ENCODE measurements at regions of chr3 and their contacts with region 1.

Region 1: DNA sequence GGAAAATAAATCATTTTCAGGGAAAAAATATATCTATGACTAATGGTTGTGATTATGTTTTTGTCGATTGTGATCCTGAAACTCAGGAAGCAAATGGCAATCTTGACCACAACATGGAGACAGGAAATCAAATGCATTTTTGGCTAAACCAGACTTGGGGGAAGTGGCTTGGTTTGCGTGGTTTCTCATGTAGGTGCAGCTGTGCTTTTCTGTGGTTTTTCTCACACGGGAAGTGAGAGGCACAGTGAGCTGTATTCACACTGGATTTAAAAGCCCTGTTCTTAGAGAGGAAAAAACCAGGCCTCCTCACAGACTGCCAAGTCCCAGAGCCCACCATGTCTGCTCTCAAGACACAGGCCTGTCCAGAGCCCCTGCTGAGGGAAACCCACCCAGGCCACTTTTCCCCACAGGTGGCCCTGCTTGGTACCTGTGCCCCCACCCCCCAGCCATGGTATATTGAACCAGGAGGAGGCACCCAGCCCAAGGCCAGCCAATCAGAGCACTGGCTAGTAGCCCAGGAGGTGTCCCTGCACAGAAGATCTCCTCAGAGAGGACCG is 46.1 kb downstream of the BTD start:
- DNase-seq: peak; percentile 99
- ATAC-seq: peak; percentile 38
- H3K4me3 ChIP-seq: no peak overlapping the region
- H3K27ac ChIP-seq: peak overlapping the region; percentile 98
- H3K4me1 ChIP-seq: peaks cover 22% of the 10 kb centered on the region
- H3K27me3 ChIP-seq: no peaks in the 10 kb centered on the region
- CTCF ChIP-seq: no peak
- POLR2A ChIP-seq: peak; percentile 65
- RAD21 ChIP-seq: peak; percentile 18; the same call in 1 of the 2 replicates

Region 2: DNA sequence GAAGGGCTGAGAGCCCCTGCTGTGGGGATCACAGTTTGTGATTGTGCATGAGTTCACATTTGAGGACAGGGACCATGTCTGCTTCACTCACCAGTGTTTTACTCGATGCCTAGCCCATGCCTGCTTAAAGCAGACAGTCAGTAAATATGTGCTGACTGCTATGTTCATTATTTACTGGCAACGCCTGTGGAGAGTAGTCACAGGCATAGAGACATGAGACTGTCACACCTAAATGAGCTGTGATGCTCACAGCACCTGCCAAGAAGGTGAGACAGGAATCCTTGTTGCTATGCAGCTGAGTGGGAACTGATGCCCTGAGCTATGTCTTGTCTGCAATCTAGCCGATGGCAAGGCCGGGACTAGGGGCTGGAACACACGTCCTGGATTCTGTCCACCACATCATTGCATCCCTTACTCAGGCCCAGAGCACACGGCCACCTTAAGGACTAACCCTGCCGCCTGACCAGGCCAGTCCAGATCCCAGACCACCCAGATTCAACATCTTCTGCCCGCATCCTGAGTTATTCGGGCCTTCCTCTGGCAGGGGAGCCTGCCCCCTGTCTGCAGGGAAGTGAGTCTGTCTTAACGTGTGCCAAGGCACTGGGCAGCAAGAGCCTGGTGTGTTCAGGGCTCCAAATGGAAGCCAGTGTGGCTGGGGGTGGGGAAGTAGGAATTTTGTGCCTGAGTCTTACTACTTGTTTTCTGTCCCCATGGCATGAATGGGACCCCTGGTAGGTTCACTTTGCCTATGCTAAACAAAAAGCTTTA is 784.2 kb before region 1 on chr3:
- CTCF ChIA-PET with region 1: no interaction called
- POLR2A ChIA-PET with region 1: no interaction called
- dilution Hi-C with region 1: no loop called
- in situ Hi-C with region 1: no loop called
- intact Hi-C with region 1: no loop called
- DNase-seq: no peak
- ATAC-seq: no peak
- H3K4me3 ChIP-seq: no peak overlapping the region
- H3K27ac ChIP-seq: no peak overlapping the region
- H3K4me1 ChIP-seq: no peaks in the 10 kb centered on the region
- H3K27me3 ChIP-seq: peaks cover 6% of the 10 kb centered on the region
- CTCF ChIP-seq: no peak
- POLR2A ChIP-seq: no peak
- RAD21 ChIP-seq: no peak

Region 3: DNA sequence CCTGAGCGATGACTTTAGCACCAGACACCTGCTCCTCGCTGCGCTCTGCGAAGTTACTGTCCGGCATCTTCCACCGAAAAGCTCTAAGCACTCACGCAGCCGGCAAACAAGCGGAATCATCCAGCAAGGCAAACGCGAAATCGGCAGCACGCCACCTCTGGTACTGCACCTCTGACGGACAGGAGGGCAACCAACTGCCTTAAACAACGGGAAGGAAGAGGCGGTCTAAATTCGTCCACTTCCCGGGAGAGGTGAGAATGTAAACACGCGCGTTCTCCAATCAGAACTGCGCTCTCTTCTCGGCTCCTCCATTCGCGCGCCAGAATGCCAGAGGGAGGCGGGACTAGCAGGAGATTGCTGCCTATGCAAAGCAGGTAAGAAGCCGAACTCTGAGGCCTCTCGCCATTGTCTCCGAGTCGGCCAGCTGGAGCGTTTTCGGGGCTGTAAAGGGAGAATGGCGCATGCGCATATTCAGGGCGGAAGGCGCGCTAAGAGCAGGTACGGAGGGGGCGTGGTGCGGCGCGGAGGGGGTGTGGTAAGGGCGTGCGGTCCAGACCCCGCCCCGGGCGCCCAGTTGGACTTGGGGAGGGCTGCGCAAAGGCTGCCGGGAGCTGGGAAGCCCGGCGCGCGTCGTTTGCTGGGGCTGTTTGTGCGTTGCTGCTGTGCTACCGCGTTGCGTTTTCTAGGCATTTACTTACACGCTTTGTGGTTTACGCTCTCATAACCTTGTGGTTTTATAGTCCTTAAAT is 46.1 kb before region 1 on chr3 and contains the starts of genes BTD and HACL1:
- CTCF ChIA-PET with region 1: no interaction called
- POLR2A ChIA-PET with region 1: no interaction called
- dilution Hi-C with region 1: no loop called
- in situ Hi-C with region 1: no loop called
- intact Hi-C with region 1: loop called (anchors 1 kb)
- DNase-seq: peak; percentile 99
- ATAC-seq: peak; percentile 97
- H3K4me3 ChIP-seq: peak within 1 kb of the TSS; percentile 66
- H3K27ac ChIP-seq: peak within 1 kb of the TSS; percentile 56
- H3K4me1 ChIP-seq: peaks cover 2% of the 10 kb centered on the region; the same call in 1 of the 2 replicates
- H3K27me3 ChIP-seq: no peaks in the 10 kb centered on the region
- CTCF ChIP-seq: peak; percentile 29; the same call in 1 of the 2 replicates
- POLR2A ChIP-seq: peak; percentile 68
- RAD21 ChIP-seq: no peak
- total RNA-seq, gene BTD: 14.2 and 21.1 TPM in 2 replicates
- total RNA-seq, gene HACL1: 28.1 and 31.4 TPM in 2 replicates

Region 4: DNA sequence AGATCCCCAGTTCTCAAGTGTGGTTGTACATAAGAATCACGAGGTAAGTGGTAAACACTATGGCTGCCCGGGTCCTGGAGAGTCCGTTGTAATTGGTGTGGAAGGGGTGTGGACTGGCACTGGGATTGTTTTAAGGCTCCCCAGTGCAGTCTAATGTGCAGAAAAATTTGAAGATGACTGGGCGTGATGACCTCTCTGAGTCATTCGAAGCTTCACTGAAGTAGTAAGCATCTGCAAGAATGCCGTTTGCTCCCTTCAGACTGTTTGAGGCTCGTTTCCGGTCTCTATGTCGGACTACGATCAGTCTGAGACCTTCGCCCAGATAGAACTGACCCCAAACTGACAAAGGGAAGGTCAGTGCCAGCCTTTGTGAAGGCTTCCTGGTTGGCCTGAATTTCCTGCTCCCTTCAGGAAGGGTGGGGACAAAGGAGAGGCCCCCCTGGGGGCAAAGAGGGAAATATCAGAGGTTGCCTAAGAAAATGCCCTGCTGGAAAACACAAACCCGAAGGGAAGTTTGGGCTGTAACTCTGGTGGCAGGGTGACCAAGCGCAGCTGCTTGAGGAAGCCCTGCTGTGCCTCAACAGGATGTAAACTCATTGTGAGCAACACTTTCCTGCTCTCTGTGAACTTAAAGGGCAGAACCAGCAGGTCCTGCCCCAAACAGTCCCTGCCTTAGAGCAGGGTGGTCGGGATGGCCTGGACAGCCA is 11.5 kb before region 1 on chr3:
- CTCF ChIA-PET with region 1: interaction called, 6 read pairs
- POLR2A ChIA-PET with region 1: no interaction called
- dilution Hi-C with region 1: no loop called
- in situ Hi-C with region 1: no loop called
- intact Hi-C with region 1: loop called (anchors 1 kb)
- DNase-seq: peak; percentile 96
- ATAC-seq: peak; percentile 78
- H3K4me3 ChIP-seq: no peak overlapping the region
- H3K27ac ChIP-seq: peak overlapping the region; percentile 86
- H3K4me1 ChIP-seq: peaks cover 37% of the 10 kb centered on the region
- H3K27me3 ChIP-seq: no peaks in the 10 kb centered on the region
- CTCF ChIP-seq: 0 out of 2 replicates have a peak, but pooled peaks have one; percentile 3
- POLR2A ChIP-seq: peak; percentile 50; the same call in 1 of the 2 replicates
- RAD21 ChIP-seq: no peak

Region 5: DNA sequence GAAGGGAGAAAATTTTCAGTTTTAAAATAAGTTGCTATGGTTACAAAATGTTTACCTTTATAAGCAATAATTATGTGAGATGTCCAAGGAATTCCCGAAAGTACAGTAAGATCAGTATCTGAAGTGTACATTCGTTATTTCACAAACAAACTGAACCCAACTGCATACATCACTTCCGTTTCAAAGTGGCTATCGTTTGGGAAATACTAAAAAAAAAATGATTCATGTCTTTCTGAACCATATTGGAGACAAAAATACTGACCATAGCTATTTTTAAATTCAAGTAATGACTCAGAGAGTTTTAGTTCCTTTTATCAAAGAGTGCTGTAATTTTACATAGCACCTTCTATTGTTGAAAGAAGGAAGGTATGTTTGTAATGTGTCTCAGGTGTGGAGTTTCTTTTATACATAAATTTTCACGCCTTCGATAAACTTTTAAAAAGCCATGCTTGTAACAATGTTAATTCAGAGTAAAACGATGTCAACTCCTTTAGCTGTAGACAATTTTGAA is 158.1 kb after region 1 on chr3:
- CTCF ChIA-PET with region 1: no interaction called
- POLR2A ChIA-PET with region 1: no interaction called
- dilution Hi-C with region 1: no loop called
- in situ Hi-C with region 1: loop called (anchors 10 kb)
- intact Hi-C with region 1: no loop called
- DNase-seq: peak; percentile 89
- ATAC-seq: peak; percentile 56
- H3K4me3 ChIP-seq: no peak overlapping the region
- H3K27ac ChIP-seq: no peak overlapping the region
- H3K4me1 ChIP-seq: peaks cover 2% of the 10 kb centered on the region; the same call in 1 of the 2 replicates
- H3K27me3 ChIP-seq: no peaks in the 10 kb centered on the region
- CTCF ChIP-seq: no peak
- POLR2A ChIP-seq: no peak
- RAD21 ChIP-seq: no peak